Vagina (tissue), 2 donors: ENCODE measurements at regions of chr9 and their contacts with region 1.

Region 1: GRCh38 chr9:17863213-17863883 is 284.5 kb downstream of the SH3GL2 start:
- DNase-seq: no peak
- H3K4me3 ChIP-seq: no peak overlapping the region
- H3K27ac ChIP-seq: no peak overlapping the region
- H3K4me1 ChIP-seq: no peaks in the 10 kb centered on the region
- H3K27me3 ChIP-seq: no peaks in the 10 kb centered on the region
- CTCF ChIP-seq: no peak
- POLR2A ChIP-seq: no peak

Region 2: GRCh38 chr9:17802249-17802857 is 61.0 kb before region 1 on chr9:
- intact Hi-C with region 1: loop called (anchors 10 kb)
- DNase-seq: no peak
- H3K4me3 ChIP-seq: no peak overlapping the region
- H3K27ac ChIP-seq: no peak overlapping the region
- H3K4me1 ChIP-seq: no peaks in the 10 kb centered on the region
- H3K27me3 ChIP-seq: no peaks in the 10 kb centered on the region
- CTCF ChIP-seq: no peak
- POLR2A ChIP-seq: no peak

Region 3: GRCh38 chr9:17847908-17848307 is 15.4 kb before region 1 on chr9:
- intact Hi-C with region 1: loop called (anchors 1 kb)
- DNase-seq: no peak
- H3K4me3 ChIP-seq: no peak overlapping the region
- H3K27ac ChIP-seq: no peak overlapping the region
- H3K4me1 ChIP-seq: no peaks in the 10 kb centered on the region
- H3K27me3 ChIP-seq: no peaks in the 10 kb centered on the region
- CTCF ChIP-seq: no peak
- POLR2A ChIP-seq: no peak